PC-9 (cell line): ENCODE measurements at regions of chr19 and their contacts with region 1.

Region 1: DNA sequence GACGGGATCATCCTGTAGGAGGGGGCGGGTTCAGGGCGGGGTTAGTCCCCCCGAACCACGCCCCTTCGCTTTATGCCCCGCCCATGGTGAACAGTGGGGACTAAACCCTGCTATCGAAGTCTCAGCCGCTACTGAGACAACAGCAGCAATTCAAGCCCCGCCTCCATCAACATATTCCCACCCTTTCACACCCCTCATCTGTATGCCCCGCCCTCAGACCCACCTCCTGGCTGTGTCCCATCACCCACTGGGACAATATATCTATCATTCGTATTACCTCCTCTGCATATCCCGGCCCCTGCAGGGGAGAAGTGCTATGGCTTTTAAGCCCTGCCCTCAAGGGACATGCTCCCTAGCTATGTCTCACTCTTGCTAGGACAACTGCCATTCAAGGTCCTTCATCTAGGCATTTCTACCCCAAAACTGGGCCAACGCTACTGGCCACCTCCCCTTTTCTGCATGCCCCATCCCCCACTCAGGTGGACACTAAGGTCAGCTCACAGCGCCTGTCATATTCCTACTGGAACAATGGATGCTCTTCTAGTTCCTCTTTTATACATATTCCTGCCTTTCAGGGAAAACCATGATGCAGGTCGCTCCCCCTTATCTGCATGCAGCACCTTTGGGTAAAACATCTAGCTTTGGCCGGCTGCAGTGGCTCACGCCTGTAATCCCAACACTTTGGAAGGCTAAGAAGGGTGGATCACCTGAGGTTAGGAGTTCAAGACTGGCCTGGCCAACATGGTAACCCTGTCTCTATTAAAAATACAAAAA is 11.9 kb downstream of the LRFN1 start:
- DNase-seq: no peak
- H3K4me3 ChIP-seq: no peak overlapping the region
- H3K27ac ChIP-seq: no peak overlapping the region
- H3K4me1 ChIP-seq: no peaks in the 10 kb centered on the region
- H3K27me3 ChIP-seq: no peaks in the 10 kb centered on the region
- CTCF ChIP-seq: no peak

Region 2: GRCh38 chr19:39251846-39252245 is 56.9 kb before region 1 on chr19:
- CTCF ChIA-PET with region 1: interaction called, 20 read pairs
- POLR2A ChIA-PET with region 1: no interaction called
- intact Hi-C with region 1: no loop called
- DNase-seq: no peak
- H3K4me3 ChIP-seq: no peak overlapping the region
- H3K27ac ChIP-seq: no peak overlapping the region
- H3K4me1 ChIP-seq: no peaks in the 10 kb centered on the region
- H3K27me3 ChIP-seq: peaks cover 11% of the 10 kb centered on the region; the same call in 1 of the 2 replicates
- CTCF ChIP-seq: no peak

Region 3: DNA sequence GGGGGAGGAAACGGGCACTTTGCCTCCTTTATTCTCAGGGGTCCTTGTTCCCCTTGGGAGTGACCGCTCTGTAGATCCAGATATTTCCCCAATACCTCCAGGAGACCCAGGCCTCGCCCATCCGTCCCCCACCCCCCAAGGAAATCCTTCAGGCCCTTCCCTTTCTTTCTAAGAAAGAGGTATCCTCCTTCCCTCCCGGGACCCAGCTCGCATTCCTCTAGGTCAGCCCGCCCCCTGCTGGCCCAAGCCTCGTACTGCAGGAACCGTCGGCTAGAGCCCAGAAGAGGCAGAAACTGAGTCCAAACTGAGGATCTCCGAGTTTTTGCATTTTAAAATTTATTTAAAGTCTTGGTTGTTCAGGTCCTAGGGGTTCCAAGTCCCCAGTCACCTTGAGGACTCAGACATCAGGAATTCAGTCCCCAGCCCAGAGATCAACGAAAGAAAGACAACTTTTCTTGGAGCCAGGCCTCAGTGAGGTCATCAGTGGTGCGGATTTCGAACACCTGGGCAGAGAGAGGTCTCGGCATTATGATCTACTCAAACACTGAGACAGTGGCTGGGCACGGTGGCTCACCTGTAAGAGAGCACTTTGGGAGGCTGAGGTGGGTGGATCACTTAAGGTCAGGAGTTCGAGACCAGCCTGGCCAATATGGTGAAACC is 19.5 kb after region 1 on chr19:
- CTCF ChIA-PET with region 1: no interaction called
- POLR2A ChIA-PET with region 1: no interaction called
- intact Hi-C with region 1: no loop called
- DNase-seq: peak; percentile 38 to 81
- H3K4me3 ChIP-seq: no peak overlapping the region
- H3K27ac ChIP-seq: no peak overlapping the region
- H3K4me1 ChIP-seq: no peaks in the 10 kb centered on the region
- H3K27me3 ChIP-seq: no peaks in the 10 kb centered on the region
- CTCF ChIP-seq: peak; percentile 97